SK-N-SH (cell line): ENCODE measurements at regions of chr17 and their contacts with region 1.

Region 1: GRCh38 chr17:2844416-2844815 is 48.2 kb downstream of the RAP1GAP2 start:
- DNase-seq: no peak
- H3K4me3 ChIP-seq: no peak overlapping the region
- H3K27ac ChIP-seq: no peak overlapping the region
- H3K4me1 ChIP-seq: peaks cover 6 to 7% of the 10 kb centered on the region in 2 experiments; a peak in 2 of 4 replicates
- H3K27me3 ChIP-seq: no peaks in the 10 kb centered on the region
- CTCF ChIP-seq: no peak
- EP300 ChIP-seq: no peak
- RAD21 ChIP-seq: no peak

Region 2: DNA sequence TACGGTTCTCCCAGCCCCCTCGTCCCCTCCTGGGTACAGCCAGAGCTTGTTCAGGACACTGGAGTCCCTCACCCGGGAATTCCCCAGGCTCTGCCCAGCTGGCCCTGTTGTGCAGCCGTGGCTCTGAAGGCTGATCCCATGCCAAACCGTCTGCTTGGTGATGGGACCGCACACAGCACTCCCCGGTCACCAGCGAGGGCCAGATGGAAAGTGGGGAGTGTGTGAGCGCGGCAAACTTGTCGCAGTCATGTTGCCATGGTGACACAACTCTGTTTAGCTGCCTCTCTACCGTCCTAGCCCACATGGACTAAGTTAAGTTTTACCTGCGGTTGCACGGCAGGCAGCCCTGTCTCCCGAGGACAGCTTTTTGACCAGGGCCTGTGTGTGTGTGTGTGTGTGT is 59.7 kb after region 1 on chr17:
- CTCF ChIA-PET with region 1: interaction called, 59 read pairs
- POLR2A ChIA-PET with region 1: interaction called, 5 read pairs
- DNase-seq: peak; percentile 78
- H3K4me3 ChIP-seq: no peak overlapping the region
- H3K27ac ChIP-seq: peak overlapping the region in 1 of 2 experiments; percentile 97; a peak in 2 of 4 replicates
- H3K4me1 ChIP-seq: peaks cover 0 to 80% of the 10 kb centered on the region in 2 experiments; a peak in 1 of 4 replicates
- H3K27me3 ChIP-seq: no peaks in the 10 kb centered on the region
- CTCF ChIP-seq: no peak
- EP300 ChIP-seq: peak in 1 of 2 experiments; percentile 62; a peak in 1 of 4 replicates
- RAD21 ChIP-seq: no peak; the same call in 1 of the 2 replicates

Region 3: GRCh38 chr17:2929881-2930533 is 85.6 kb after region 1 on chr17:
- CTCF ChIA-PET with region 1: interaction called, 135 read pairs
- POLR2A ChIA-PET with region 1: interaction called, 9 read pairs
- DNase-seq: peak; percentile 85
- H3K4me3 ChIP-seq: no peak overlapping the region; a peak in 1 of 4 replicates
- H3K27ac ChIP-seq: peak overlapping the region in 1 of 2 experiments; percentile 94; a peak in 2 of 4 replicates
- H3K4me1 ChIP-seq: peaks cover 6 to 59% of the 10 kb centered on the region in 2 experiments; a peak in 2 of 4 replicates
- H3K27me3 ChIP-seq: no peaks in the 10 kb centered on the region
- CTCF ChIP-seq: peak; percentile 76
- EP300 ChIP-seq: 0 out of 4 replicates have a peak, but pooled peaks of 1 of the 2 experiments have one; percentile 24
- RAD21 ChIP-seq: peak; percentile 87

Region 4: DNA sequence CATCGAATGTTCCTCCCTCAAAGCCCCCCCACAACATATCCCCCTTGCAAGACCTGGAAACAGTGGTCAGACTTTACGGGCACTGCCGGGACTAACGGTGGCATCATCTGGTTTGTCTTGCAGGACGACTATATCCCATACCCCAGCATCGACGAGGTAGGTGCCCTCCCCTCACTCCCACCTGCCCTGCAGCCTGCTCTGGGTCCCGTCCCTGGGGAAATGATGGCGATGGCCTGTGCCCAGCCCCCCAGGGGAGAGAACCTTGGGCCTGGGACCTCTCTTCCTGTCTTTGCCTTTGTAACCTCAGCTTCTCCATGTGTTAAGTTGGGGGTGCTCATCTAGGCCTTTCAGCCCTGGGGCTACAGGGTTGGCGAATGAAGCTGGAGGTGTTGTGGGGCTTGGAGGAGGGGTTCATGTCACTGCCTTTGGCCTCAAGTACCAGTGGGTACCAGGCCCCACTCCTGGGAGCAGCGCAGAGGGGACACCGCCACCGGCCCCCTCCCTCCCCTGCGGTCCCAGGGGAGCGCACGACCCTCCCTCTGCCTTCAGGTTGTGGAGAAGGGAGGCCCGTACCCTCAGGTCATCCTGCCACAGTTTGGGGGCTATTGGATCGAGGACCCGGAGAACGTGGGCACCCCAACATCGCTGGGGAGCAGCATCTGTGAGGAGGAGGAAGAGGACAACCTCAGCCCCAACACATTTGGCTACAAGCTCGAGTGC is 119.1 kb after region 1 on chr17:
- CTCF ChIA-PET with region 1: interaction called, 11 read pairs
- POLR2A ChIA-PET with region 1: no interaction called
- DNase-seq: no peak
- H3K4me3 ChIP-seq: no peak overlapping the region
- H3K27ac ChIP-seq: peak overlapping the region; percentile 7 to 60; a peak in 1 of 4 replicates
- H3K4me1 ChIP-seq: peaks cover 26 to 67% of the 10 kb centered on the region in 2 experiments; a peak in 3 of 4 replicates
- H3K27me3 ChIP-seq: no peaks in the 10 kb centered on the region
- CTCF ChIP-seq: no peak
- EP300 ChIP-seq: no peak
- RAD21 ChIP-seq: no peak

Region 5: GRCh38 chr17:3020381-3020780 is 176.0 kb after region 1 on chr17:
- CTCF ChIA-PET with region 1: interaction called, 238 read pairs
- POLR2A ChIA-PET with region 1: no interaction called
- DNase-seq: no peak
- H3K4me3 ChIP-seq: no peak overlapping the region; a peak in 1 of 4 replicates
- H3K27ac ChIP-seq: no peak overlapping the region
- H3K4me1 ChIP-seq: no peaks in the 10 kb centered on the region
- H3K27me3 ChIP-seq: no peaks in the 10 kb centered on the region
- CTCF ChIP-seq: no peak
- EP300 ChIP-seq: no peak
- RAD21 ChIP-seq: no peak